ENCODE measurements at regions of chr1 and their contacts with region 1.

Region 1: GRCh38 chr1:150578965-150579798 is at the start of gene MCL1:
- H3K4me3 ChIP-seq: peak within 1 kb of the TSS; percentile 82
- H3K27ac ChIP-seq: peak within 1 kb of the TSS; percentile 95
- H3K4me1 ChIP-seq: no peaks in the 10 kb centered on the region
- CTCF ChIP-seq: no peak

Region 2: GRCh38 chr1:150221552-150221951 is 357.6 kb before region 1 on chr1:
- CTCF ChIA-PET with region 1: no interaction called
- POLR2A ChIA-PET with region 1: no interaction called
- H3K4me3 ChIP-seq: no peak overlapping the region
- H3K27ac ChIP-seq: no peak overlapping the region
- H3K4me1 ChIP-seq: no peaks in the 10 kb centered on the region
- CTCF ChIP-seq: no peak

Region 3: GRCh38 chr1:150548632-150549495 is 30.3 kb before region 1 on chr1 and contains the start of gene ADAMTSL4:
- CTCF ChIA-PET with region 1: interaction called, 3 read pairs
- POLR2A ChIA-PET with region 1: interaction called, 10 read pairs
- H3K4me3 ChIP-seq: peak within 1 kb of the TSS; percentile 50
- H3K27ac ChIP-seq: no peak within 1 kb of the TSS; the same call in 1 of the 2 replicates
- H3K4me1 ChIP-seq: no peaks in the 10 kb centered on the region; the same call in 1 of the 2 replicates
- CTCF ChIP-seq: peak; percentile 42; the same call in 1 of the 2 replicates

Region 4: GRCh38 chr1:150596095-150596892 is 17.1 kb after region 1 on chr1:
- CTCF ChIA-PET with region 1: interaction called, 3 read pairs
- POLR2A ChIA-PET with region 1: interaction called, 18 read pairs
- H3K4me3 ChIP-seq: no peak overlapping the region
- H3K27ac ChIP-seq: no peak overlapping the region
- H3K4me1 ChIP-seq: no peaks in the 10 kb centered on the region
- CTCF ChIP-seq: no peak

Region 5: DNA sequence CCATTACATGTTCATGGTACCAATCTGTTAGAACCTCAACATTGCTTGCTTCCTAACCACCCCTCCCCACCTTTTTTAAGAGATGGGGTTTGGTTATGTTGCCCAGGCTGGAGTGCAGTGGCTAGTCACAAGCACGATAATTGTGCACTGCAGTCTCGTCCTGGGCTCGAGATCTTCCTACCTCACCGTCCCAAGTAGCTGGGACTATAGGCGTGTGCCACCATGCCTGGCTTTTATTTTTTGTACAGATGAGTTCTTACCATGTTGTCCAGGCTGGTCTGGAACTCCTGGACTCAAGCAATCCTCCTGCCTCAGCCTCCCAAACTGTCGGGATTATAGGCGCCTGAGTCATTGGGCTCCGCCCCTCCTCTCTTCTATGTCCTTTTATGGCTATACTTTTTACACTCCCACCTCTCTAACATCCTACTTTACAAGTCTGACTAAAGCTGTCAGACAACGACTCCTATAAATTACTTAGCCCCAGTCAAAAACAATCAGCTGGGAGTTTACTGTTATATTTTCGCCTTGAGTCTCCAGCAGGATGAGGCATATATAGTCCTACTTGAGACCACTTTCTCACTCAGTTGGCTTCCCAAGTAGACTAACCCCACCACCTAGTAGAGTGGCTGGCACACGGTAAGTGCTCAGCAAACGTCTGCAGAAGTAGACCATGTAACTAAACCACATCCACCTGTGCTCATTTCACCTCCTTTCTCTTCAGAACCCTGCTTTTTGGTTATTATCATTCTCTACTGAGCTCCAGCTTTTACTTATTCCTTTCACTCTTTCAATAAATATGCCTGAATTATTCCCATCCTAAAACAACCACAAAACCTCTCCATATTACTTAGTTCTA is 36.4 kb after region 1 on chr1:
- CTCF ChIA-PET with region 1: interaction called, 10 read pairs
- POLR2A ChIA-PET with region 1: interaction called, 21 read pairs
- H3K4me3 ChIP-seq: no peak overlapping the region
- H3K27ac ChIP-seq: no peak overlapping the region
- H3K4me1 ChIP-seq: peaks cover 9% of the 10 kb centered on the region
- CTCF ChIP-seq: no peak

Region 6: DNA sequence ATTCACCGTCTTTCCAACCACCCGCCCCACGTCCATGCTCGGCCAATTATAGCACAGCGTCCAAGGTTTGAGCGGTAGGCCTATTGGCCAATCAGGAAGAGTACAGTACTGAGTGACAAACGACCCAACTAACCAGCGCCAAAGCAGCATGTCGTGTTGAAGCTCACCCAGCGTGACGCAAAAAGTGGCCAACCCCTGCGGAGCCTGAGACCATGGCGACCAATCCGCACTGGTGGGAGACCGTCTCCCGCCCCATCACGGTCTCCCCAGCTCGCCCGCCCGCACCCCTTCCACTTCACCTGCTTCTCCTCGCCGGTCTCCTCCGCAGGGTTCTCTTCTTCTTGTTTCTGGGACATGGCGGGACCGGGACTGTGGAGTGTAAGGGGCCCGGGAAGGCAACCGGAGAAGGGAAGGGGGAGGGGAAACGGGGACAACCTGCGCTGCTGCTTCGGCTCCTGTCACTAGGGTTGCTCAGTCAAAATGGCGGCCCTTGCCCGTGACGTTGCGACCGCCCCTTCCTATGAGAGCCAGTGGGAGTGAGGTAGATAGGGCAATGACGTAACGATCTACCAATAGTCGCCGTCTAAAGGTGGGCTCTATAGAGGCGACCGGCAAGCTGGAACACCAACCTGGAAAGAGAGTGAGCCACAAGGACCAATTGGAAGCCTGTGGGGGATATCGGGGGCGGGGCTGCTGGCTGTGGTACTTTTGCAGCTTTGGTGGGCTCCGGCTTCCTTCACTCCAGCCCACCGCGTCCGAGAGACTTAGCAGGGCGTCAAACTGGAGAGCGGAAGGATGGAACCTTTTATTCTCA is 50.1 kb after region 1 on chr1 and contains the start of gene ENSA:
- CTCF ChIA-PET with region 1: interaction called, 3 read pairs
- POLR2A ChIA-PET with region 1: interaction called, 56 read pairs
- H3K4me3 ChIP-seq: peak within 1 kb of the TSS; percentile 77
- H3K27ac ChIP-seq: peak within 1 kb of the TSS; percentile 61
- H3K4me1 ChIP-seq: no peaks in the 10 kb centered on the region
- CTCF ChIP-seq: no peak

Measured in HEK293 (cell line).